ENCODE measurements at regions of chr6 and their contacts with region 1.

Region 1: DNA sequence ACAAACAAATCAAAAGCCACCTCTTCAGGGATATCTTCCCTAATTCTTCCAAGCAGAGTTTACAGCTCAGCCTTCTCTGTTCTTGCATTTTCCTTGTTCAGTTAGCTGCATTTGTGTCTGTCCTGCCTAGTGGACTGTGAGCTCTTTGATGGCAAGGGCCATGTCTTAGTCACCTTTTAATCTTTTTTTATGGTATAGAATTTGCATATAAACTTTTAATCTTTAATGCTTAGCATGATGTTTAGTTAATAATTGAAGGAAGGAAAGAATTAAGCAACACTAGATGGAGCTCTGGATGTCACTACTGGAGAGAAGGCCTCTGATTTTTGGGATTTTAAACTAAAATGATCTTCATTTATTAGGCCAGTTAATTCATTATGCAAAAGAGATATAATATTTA is 12.1 kb downstream of the PPP2R5D start:
- DNase-seq: no peak
- ATAC-seq: no peak
- H3K4me3 ChIP-seq: no peak overlapping the region
- H3K27ac ChIP-seq: no peak overlapping the region
- H3K4me1 ChIP-seq: no peaks in the 10 kb centered on the region
- H3K27me3 ChIP-seq: no peaks in the 10 kb centered on the region
- CTCF ChIP-seq: no peak; a peak in 1 of 6 replicates
- EP300 ChIP-seq: no peak
- POLR2A ChIP-seq: no peak
- RAD21 ChIP-seq: no peak

Region 2: DNA sequence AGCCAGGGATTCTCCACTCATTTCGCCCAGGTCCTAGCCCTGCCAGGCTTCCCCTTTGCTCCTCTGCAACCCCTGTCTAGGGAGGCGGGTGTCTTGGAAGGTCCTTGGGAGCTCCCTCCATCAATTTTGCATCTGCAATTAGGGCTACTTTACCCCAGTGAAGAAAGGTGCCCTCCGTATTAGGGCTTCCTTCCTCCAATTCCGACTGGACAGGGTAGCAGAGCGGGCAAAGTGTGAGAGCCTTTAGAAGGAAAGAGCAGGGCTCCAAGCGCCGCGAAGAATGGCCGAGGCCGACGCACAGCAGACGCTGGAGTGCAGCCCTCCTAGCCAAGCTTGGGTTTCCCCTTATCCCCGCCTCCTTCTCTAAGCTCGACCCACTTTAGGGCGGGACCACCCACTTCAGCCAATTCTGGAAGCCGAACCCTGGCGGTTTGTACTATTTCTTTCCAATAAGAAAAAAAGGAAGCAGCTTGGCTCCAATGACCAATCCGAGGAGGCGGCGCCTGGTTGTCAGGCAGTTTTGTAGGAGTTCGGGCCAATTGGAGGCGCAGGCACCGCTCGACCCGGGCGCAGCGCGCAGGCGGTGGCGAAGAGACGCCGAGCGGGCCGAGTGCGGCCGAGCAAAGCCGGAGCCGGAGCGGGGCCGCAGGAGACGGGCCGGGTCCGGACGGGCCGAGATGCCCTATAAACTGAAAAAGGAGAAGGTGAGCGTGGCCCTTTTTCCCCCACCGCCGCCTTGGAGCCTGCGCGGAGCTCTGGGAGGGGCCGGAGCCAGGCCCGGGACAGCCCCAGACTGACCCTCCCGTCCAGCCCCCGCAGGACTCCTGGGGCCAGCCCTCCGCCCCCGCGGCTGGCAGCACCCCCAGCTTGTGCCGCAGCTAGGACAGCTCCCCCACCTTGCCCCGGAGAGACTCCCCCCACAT is 12.3 kb before region 1 on chr6 and contains the start of gene PPP2R5D:
- CTCF ChIA-PET with region 1: interaction called, 5 read pairs
- POLR2A ChIA-PET with region 1: interaction called, 10 read pairs
- RAD21 ChIA-PET with region 1: interaction called, 3 read pairs
- SMC1A ChIA-PET with region 1: interaction called, 6 read pairs
- in situ Hi-C with region 1: no loop called
- intact Hi-C with region 1: no loop called
- DNase-seq: peak; percentile 94
- ATAC-seq: peak; percentile 97
- H3K4me3 ChIP-seq: peak within 1 kb of the TSS; percentile 98
- H3K27ac ChIP-seq: peak within 1 kb of the TSS; percentile 79
- H3K4me1 ChIP-seq: peaks cover 23% of the 10 kb centered on the region
- H3K27me3 ChIP-seq: no peaks in the 10 kb centered on the region
- CTCF ChIP-seq: no peak
- EP300 ChIP-seq: no peak
- POLR2A ChIP-seq: peak; percentile 92
- RAD21 ChIP-seq: no peak
- polyA plus RNA-seq, gene PPP2R5D: 1.5 to 1.6 TPM

Region 3: DNA sequence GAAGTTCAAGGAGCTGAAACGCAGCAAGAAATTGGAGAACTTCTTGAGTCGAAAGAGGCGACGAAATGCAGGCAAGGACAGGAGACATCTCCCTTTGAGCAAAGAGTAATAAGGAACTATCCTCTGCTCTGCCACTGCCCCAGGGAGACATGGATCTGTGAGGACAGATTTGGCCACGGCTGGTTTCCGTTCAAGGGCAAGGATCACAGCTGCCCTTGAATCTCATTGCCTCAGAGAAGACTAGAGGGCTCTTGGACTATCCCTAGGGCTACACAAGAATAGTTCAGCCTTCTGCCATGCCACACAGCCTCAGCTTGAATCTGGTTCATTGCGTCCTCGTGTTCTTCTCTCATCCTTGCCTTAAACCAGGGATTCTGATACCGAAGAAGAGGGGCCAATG is 32.6 kb after region 1 on chr6:
- CTCF ChIA-PET with region 1: no interaction called
- POLR2A ChIA-PET with region 1: no interaction called
- RAD21 ChIA-PET with region 1: no interaction called
- SMC1A ChIA-PET with region 1: no interaction called
- in situ Hi-C with region 1: no loop called
- intact Hi-C with region 1: no loop called
- DNase-seq: no peak
- ATAC-seq: no peak
- H3K4me3 ChIP-seq: no peak overlapping the region
- H3K27ac ChIP-seq: no peak overlapping the region
- H3K4me1 ChIP-seq: no peaks in the 10 kb centered on the region
- H3K27me3 ChIP-seq: no peaks in the 10 kb centered on the region
- CTCF ChIP-seq: no peak
- EP300 ChIP-seq: no peak
- POLR2A ChIP-seq: no peak
- RAD21 ChIP-seq: no peak

Region 4: DNA sequence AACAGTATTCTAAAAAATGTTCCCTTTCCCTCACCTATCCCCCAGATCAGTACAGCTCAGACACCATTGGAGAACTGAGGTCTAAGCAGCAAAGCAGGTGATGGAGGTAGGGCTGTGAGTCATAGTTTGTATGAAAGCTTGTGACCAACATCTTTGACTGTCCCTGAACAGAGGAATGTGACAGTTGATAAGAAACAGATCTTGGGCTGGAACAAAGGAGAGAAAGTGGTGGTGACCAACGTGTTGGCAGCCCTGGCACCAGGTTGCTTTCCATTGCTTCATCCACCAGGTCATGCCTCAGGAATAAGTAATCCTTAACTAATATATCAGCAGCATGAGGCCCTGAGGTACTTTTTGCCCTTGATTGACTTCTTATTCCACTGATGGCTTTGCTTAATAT is 332.0 kb after region 1 on chr6:
- CTCF ChIA-PET with region 1: no interaction called
- POLR2A ChIA-PET with region 1: interaction called, 11 read pairs
- RAD21 ChIA-PET with region 1: no interaction called
- SMC1A ChIA-PET with region 1: no interaction called
- in situ Hi-C with region 1: no loop called
- intact Hi-C with region 1: no loop called
- DNase-seq: no peak
- ATAC-seq: no peak
- H3K4me3 ChIP-seq: no peak overlapping the region
- H3K27ac ChIP-seq: no peak overlapping the region
- H3K4me1 ChIP-seq: no peaks in the 10 kb centered on the region
- H3K27me3 ChIP-seq: no peaks in the 10 kb centered on the region
- CTCF ChIP-seq: no peak
- EP300 ChIP-seq: no peak
- POLR2A ChIP-seq: no peak
- RAD21 ChIP-seq: no peak